GM23248 (cell line): ENCODE measurements at regions of chr18 and their contacts with region 1.

Region 1: DNA sequence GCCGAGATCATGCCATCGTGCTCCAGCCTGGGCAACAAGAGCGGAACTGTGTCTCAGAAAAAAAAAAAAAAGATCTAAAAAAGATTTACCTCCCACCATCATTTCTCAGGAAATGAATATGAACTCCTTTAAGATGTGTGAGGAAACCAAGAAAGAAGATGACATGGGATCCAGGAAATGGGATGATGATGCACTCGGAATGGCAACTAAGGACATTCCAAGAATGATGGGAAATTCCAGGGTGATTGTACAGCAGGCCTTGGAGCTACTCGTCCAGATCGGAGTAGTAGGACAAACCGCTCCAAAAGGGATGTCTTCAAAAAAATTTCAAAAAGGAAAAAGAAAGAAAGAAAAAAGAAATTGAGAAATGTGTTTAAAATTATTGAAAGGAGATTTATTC is 84.9 kb upstream of the PMAIP1 start:
- DNase-seq: peak; percentile 91
- H3K4me3 ChIP-seq: peak overlapping the region; percentile 36
- H3K27ac ChIP-seq: peak overlapping the region; percentile 85
- H3K4me1 ChIP-seq: peaks cover 14% of the 10 kb centered on the region
- H3K27me3 ChIP-seq: no peaks in the 10 kb centered on the region

Region 2: DNA sequence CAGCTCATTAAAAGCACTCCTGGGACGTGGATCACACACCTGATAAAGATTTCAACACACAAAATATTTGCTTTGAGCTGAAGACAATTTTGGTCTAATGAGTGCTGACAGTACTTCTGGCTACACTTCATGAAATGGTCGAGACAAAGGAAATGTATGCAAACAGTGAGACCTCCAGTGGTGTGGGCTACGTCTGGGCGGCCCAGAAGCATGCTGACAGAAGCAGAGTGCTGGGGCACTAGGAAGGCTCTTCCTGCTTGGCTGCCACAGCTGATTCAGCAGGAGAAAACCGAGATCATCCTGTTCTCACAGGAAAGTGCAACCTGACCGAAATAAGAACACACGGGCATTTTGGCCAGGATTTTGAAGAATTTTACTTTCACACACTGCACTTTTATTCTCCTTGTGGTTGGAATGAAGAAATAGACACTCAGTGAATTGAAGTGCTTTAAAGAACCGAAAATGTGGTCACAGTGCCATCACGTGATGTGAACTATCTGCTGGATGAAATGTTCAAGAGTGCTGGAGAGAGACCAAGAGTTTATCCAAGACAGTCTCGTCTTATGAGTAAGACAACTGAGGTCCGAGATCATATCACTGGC is 267.2 kb before region 1 on chr18:
- in situ Hi-C with region 1: no loop called
- DNase-seq: peak; percentile 81
- H3K4me3 ChIP-seq: peak overlapping the region; percentile 27; the same call in 1 of the 2 replicates
- H3K27ac ChIP-seq: no peak overlapping the region
- H3K4me1 ChIP-seq: peaks cover 9% of the 10 kb centered on the region; the same call in 1 of the 2 replicates
- H3K27me3 ChIP-seq: no peaks in the 10 kb centered on the region

Region 3: DNA sequence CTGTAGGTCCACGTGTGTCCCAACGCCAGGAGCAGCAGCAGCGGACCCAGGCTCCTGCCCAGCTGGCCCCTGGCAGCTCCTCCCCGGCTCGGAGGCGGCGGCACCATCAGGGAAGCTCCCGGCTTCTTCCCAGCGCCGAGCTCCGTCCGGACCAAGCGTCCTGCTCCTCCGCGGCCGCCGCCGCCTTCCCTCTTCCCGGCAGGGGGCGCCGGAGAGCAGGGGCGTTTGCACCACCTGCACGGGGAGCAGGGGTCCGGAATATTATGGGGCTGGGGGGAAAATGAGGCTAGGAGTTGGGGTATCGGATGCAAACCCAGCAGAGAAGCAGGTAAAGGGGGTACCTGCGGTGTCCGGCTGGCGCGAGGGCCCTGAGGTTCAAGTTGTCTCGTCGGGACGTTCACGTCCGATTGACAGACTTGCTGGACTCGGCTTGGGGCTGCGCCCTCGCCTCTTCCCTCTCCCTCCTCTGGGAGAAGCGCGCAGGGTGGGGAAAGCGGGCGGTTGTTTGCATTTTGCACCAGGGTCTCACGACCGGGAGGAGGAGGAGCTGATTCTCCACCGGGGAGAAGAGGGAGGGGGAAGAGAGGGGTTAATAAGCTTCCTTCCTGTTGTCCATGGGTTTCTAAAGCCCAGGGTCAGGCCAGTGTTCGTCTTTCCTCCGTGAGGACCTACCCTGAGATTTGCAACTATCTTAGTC is 117.5 kb before region 1 on chr18 and contains the start of gene CCBE1:
- in situ Hi-C with region 1: loop called (anchors 10 kb)
- DNase-seq: peak; percentile 85
- H3K4me3 ChIP-seq: peak within 1 kb of the TSS; percentile 94
- H3K27ac ChIP-seq: no peak within 1 kb of the TSS
- H3K4me1 ChIP-seq: peaks cover 17% of the 10 kb centered on the region; the same call in 1 of the 2 replicates
- H3K27me3 ChIP-seq: no peaks in the 10 kb centered on the region
- total RNA-seq, gene CCBE1: 11.4 and 16.6 TPM in 2 replicates

Region 4: GRCh38 chr18:59744271-59744721 is 70.6 kb before region 1 on chr18:
- in situ Hi-C with region 1: loop called (anchors 10 kb)
- DNase-seq: peak; percentile 95
- H3K4me3 ChIP-seq: no peak overlapping the region
- H3K27ac ChIP-seq: peak overlapping the region; percentile 87
- H3K4me1 ChIP-seq: peaks cover 45% of the 10 kb centered on the region
- H3K27me3 ChIP-seq: no peaks in the 10 kb centered on the region